Sciatic nerve (tissue), 2 donors: ENCODE measurements at regions of chr4 and their contacts with region 1.

Region 1: GRCh38 chr4:87093443-87094123 is 126.8 kb downstream of the KLHL8 start:
- DNase-seq: no peak
- ATAC-seq: peak; percentile 75

Region 2: GRCh38 chr4:86924811-86925210 is 168.8 kb before region 1 on chr4:
- intact Hi-C with region 1: loop called (anchors 5 kb)
- DNase-seq: no peak
- ATAC-seq: no peak

Region 3: DNA sequence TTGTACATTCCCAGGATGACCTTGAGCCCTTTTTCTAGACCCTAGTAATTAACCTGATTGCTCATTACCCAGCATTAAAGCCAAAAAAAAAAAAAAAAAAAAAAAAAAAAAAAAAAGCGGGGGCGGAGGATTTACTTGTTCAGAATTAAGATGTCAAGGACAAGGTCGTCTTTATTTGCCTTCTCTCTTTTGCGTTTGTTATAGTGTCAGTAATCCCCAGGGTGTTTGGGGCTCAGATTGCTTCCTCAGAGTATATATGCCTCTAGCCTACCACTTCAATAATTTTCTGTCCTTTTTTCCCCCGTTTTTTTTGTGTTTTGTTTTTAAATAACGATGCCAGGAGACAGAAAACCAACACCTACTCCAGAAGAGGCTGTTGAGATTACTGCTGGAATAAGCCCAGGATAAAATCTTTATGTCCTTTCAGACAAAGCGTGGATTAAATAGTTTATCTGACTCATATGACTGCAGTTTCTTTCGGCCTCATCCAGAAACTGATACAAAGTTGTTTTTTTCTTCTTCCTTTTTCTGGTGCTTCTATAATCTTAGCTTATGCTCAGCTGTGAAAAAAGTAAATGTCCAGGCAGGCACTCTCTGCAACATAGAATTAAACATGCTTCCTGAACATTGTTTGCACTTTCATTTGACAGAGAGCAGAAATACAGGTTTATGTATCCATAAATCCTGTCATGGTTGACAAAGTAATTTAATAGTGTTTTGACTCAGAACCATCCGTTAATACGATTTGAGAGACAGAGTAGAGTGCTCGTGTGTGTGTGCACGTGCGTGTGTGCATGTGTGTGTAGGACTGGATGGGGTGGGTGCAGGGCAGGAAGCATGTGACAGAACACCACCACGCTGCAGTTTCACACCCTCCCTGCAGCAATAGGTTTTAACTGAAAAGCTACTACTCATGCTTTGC is 20.1 kb before region 1 on chr4:
- intact Hi-C with region 1: no loop called
- DNase-seq: no peak
- ATAC-seq: peak; percentile 78